Activated naive CD4-positive, alpha-beta T cell treated with anti-CD3 and anti-CD28 coated beads for 36 hours (primary cell): ENCODE measurements at regions of chr10 and their contacts with region 1.

Region 1: DNA sequence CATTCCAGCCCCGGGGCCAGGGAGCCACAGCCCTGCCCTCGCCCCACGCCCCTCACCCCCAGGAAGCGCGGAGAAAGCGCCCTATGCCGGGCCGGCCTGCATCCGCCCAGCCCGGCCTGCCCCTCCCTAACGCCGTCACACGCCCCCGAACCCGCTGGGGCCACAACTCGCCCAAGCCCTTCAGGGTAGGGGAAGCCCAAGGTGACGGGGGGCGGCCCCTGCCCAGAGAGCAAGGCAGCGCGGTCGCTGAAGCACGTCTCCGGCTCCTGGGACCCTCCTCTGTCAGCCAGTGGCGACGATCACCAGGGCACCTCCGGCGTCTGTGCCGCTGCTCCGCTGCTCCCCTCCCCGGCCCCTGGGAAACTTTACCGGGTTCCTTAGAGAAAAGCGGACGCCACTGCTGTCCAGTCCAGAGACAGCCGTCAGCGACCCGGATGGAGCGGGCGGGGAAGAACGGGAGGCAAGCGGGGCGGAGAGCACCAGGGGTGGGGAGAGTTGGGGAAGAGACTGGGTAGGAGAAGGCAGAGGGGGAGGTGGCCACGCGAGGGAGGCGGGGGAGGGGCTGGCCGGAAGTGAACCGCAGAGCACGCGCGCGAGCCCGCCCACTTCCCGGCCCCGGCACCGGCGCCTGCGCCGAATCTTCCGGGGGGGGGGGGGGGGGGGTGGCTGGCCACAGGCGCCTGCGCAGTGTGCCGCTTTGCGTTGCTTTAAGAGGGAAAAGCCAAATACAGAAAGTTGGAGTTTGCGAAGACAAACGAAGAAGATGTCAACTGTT is at the start of gene HERC4:
- DNase-seq: peak; percentile 92
- H3K4me3 Mint-ChIP-seq: peak within 1 kb of the TSS; percentile 97
- H3K27ac Mint-ChIP-seq: peak within 1 kb of the TSS; percentile 91
- H3K4me1 Mint-ChIP-seq: peaks cover 33% of the 10 kb centered on the region
- H3K27me3 Mint-ChIP-seq: no peaks in the 10 kb centered on the region
- total RNA-seq, gene HERC4: 42.2 to 45.0 TPM

Region 2: GRCh38 chr10:67884313-67884841 is 190.6 kb before region 1 on chr10 and contains the start of gene SIRT1:
- CTCF ChIA-PET with region 1: interaction called, 4 read pairs
- intact Hi-C with region 1: loop called (anchors 1 kb)
- DNase-seq: peak; percentile 88
- H3K4me3 Mint-ChIP-seq: peak within 1 kb of the TSS; percentile 90
- H3K27ac Mint-ChIP-seq: peak within 1 kb of the TSS; percentile 89
- H3K4me1 Mint-ChIP-seq: peaks cover 25% of the 10 kb centered on the region
- H3K27me3 Mint-ChIP-seq: no peaks in the 10 kb centered on the region
- total RNA-seq, gene SIRT1: 18.7 to 18.8 TPM

Region 3: DNA sequence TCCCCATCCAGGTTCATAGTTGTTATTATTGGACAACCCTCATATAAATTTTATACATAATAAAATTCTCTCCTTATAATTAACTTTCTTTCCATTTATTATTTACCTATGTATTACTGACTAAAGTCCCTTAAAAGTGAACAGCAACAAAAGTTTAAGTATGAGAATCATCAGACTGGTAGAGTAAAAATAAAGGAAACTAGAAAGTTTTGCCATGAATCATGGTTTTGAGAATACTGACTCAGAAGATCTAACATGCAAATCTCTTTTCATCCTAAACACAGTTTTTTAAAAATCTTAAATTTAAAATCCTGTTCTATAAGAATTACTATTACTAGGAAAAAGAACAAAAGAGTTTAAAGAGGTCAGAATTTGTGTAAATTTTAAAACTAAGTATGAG is 31.9 kb before region 1 on chr10:
- CTCF ChIA-PET with region 1: no interaction called
- intact Hi-C with region 1: loop called (anchors 1 kb)
- DNase-seq: no peak
- H3K4me3 Mint-ChIP-seq: no peak overlapping the region
- H3K27ac Mint-ChIP-seq: peak overlapping the region; percentile 63
- H3K4me1 Mint-ChIP-seq: peaks cover 33% of the 10 kb centered on the region
- H3K27me3 Mint-ChIP-seq: no peaks in the 10 kb centered on the region